Activated CD4-positive, alpha-beta memory T cell treated with anti-CD3 and anti-CD28 coated beads for 36 hours (primary cell): ENCODE measurements at regions of chr2 and their contacts with region 1.

Region 1: GRCh38 chr2:225027061-225027762 is 15.1 kb downstream of the DOCK10 start:
- DNase-seq: peak; percentile 56
- H3K4me3 Mint-ChIP-seq: no peak overlapping the region
- H3K27ac Mint-ChIP-seq: peak overlapping the region; percentile 76
- H3K4me1 Mint-ChIP-seq: peaks cover 79% of the 10 kb centered on the region
- H3K27me3 Mint-ChIP-seq: no peaks in the 10 kb centered on the region

Region 2: GRCh38 chr2:225010804-225011203 is 16.4 kb before region 1 on chr2:
- CTCF ChIA-PET with region 1: interaction called, 3 read pairs
- POLR2A ChIA-PET with region 1: interaction called, 4 read pairs
- intact Hi-C with region 1: loop called (anchors 1 kb)
- DNase-seq: no peak
- H3K4me3 Mint-ChIP-seq: no peak overlapping the region
- H3K27ac Mint-ChIP-seq: peak overlapping the region; percentile 78
- H3K4me1 Mint-ChIP-seq: peaks cover 93% of the 10 kb centered on the region
- H3K27me3 Mint-ChIP-seq: no peaks in the 10 kb centered on the region